Naive thymus-derived CD4-positive, alpha-beta T cell (primary cell): ENCODE measurements at regions of chr17 and their contacts with region 1.

Region 1: DNA sequence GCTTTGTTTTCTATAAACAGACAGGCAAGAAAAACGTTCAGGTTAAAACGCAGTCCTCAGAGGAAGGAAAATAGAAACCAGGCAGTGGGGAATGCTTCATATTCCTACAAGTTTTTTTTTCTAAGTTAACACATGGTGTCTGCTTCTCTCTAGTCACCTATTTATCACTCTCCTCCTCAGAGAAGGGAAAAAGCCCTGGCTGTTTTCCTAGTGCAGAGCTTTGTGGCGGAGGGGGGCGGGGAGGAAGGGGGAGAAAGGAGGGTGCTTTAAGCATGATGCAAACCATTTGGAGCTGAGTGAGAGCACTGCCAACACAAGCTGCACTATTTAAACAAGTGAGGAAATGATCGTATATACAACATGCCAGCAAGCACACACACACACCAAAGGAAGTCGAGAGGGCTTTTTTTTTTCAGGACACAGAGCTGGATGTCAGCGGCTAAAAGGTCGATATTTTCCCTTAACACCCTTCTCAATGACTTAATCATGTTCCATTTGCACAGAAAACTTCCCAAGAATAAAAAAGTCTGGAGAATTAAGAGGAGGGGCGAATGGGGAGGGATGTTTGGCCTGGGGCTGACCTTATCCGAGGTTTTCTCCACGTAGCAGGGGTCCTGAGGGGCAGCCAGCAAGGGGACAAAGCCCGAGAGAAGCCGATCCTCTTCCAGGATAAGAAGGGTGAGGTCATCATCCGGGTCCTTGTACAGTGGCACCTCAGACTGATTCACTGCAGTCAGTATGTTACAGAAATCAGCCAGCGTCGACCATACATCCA is 117.4 kb downstream of the HIC1 start:
- DNase-seq: no peak
- ATAC-seq: no peak
- H3K4me3 ChIP-seq: no peak overlapping the region
- H3K4me3 Mint-ChIP-seq: no peak overlapping the region
- H3K27ac ChIP-seq: no peak overlapping the region
- H3K27ac Mint-ChIP-seq: peak overlapping the region in 1 of 9 donors; percentile 29
- H3K4me1 ChIP-seq: no peaks in the 10 kb centered on the region
- H3K4me1 Mint-ChIP-seq: peaks cover 0 to 39% (median 6%) of the 10 kb centered on the region in 7 donors
- H3K27me3 ChIP-seq: no peaks in the 10 kb centered on the region
- H3K27me3 Mint-ChIP-seq: no peaks in the 10 kb centered on the region

Region 2: GRCh38 chr17:2064980-2065785 is 107.1 kb before region 1 on chr17:
- CTCF ChIA-PET with region 1: no interaction called
- POLR2A ChIA-PET with region 1: no interaction called
- intact Hi-C with region 1: loop called in 1 of 2 experiments (anchors 5 kb)
- DNase-seq: peak in 1 of 9 donors; percentile 67
- ATAC-seq: peak; percentile 73
- H3K4me3 ChIP-seq: no peak overlapping the region
- H3K4me3 Mint-ChIP-seq: peak overlapping the region in 1 of 10 donors; percentile 45
- H3K27ac ChIP-seq: no peak overlapping the region
- H3K27ac Mint-ChIP-seq: peak overlapping the region in 2 of 9 donors; percentile 55 to 90
- H3K4me1 ChIP-seq: peaks cover 0 to 19% of the 10 kb centered on the region in 2 donors
- H3K4me1 Mint-ChIP-seq: peaks cover 0 to 84% (median 1%) of the 10 kb centered on the region in 7 donors
- H3K27me3 ChIP-seq: no peaks in the 10 kb centered on the region
- H3K27me3 Mint-ChIP-seq: peaks cover 0 to 10% (median 0%) of the 10 kb centered on the region in 5 donors